Gastrocnemius medialis (tissue), 4 donors: ENCODE measurements at regions of chr6 and their contacts with region 1.

Region 1: DNA sequence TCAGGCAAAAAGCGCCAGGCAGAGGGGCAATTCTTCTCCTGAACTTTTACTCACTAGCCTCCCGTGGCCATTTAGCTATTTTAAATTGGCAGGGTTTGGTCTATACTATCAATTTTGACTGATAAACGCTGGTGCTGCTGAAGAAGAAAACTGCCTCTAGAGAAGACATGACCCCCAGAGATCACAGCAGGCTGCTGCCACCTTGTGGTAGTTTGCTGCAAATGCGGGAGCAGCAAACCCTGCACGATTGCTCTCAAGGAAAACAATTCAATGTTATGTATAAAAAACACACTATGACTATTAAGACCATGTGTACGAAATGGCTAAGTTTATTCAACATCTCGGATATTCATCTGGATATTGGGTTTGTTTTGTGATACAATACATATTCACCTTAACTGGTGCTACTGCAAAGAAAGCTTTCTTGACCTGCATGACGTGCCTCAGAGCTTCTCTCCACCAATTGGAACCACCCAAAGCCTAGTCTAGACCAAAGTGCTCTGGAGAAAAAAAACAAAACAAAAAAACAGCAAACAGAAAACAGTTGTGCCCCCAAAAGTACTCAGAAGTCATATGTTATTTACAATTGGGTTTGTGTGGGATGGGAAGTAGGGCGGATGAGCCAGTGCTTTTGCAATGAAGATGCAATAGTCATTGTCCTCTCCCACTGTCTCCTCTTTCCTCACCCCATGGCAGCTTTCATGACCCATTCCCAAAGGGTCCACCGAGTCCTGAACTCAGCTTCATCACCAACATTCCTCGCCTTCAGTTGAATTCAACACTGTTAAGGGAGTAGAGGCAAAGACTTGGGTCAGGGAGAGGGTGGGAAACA is 19.6 kb upstream of the IL17F start:
- DNase-seq: peak; percentile 18 to 43
- ATAC-seq: peak; percentile 71 to 73
- H3K4me3 ChIP-seq: no peak overlapping the region
- H3K27ac ChIP-seq: no peak overlapping the region
- H3K4me1 ChIP-seq: no peaks in the 10 kb centered on the region
- H3K27me3 ChIP-seq: no peaks in the 10 kb centered on the region
- CTCF ChIP-seq: peak; percentile 75 to 93 (median 78)
- POLR2A ChIP-seq: no peak

Region 2: GRCh38 chr6:52063584-52064344 is 200.2 kb before region 1 on chr6:
- in situ Hi-C with region 1: no loop called
- intact Hi-C with region 1: loop called (anchors 1 kb)
- DNase-seq: peak in 1 of 2 donors; percentile 25
- ATAC-seq: peak; percentile 74 to 84
- H3K4me3 ChIP-seq: peak overlapping the region in 2 of 4 donors; percentile 21 to 34
- H3K27ac ChIP-seq: no peak overlapping the region
- H3K4me1 ChIP-seq: peaks cover 0 to 3% of the 10 kb centered on the region in 2 donors
- H3K27me3 ChIP-seq: no peaks in the 10 kb centered on the region
- CTCF ChIP-seq: peak in 4 of 5 experiments; percentile 37 to 72 (median 44)
- POLR2A ChIP-seq: no peak

Region 3: DNA sequence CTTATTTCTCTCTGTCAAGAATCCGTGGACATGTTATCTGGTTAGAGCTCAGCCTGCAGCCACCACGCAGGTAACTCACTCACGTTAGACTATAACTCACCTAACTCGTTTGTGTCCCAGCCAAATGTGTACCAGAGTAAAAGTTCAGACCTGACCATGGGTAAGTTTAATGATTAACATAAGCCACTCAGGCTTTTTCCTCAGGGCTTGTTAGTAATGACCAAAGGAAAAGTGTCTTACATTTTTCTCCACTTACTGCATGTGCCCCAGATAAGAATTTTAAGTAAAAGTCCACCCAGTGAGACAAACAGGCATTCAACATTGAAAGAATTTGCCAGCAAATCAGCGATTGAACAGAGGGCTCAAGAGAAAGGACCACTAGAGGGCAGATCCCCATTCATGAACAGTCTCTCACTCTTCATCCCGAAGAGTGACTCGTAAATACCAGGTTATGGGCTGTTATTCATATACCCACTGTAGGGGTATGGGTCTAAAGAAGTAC is 176.4 kb before region 1 on chr6 and contains the start of gene PKHD1:
- in situ Hi-C with region 1: loop called in 1 of 4 experiments (anchors 10 kb)
- intact Hi-C with region 1: loop called (anchors 2 kb)
- DNase-seq: no peak
- ATAC-seq: peak in 1 of 2 donors; percentile 74
- H3K4me3 ChIP-seq: no peak within 1 kb of the TSS
- H3K27ac ChIP-seq: no peak within 1 kb of the TSS
- H3K4me1 ChIP-seq: no peaks in the 10 kb centered on the region
- H3K27me3 ChIP-seq: no peaks in the 10 kb centered on the region
- CTCF ChIP-seq: peak in 4 of 5 experiments; percentile 34 to 49 (median 42)
- POLR2A ChIP-seq: no peak
- total RNA-seq, gene PKHD1: 0.02 to 0.05 (median 0.02) TPM in 3 of 4 donors, not detected in the other

Region 4: GRCh38 chr6:52162940-52163908 is 100.7 kb before region 1 on chr6:
- in situ Hi-C with region 1: no loop called
- intact Hi-C with region 1: loop called (anchors 2 kb)
- DNase-seq: no peak
- ATAC-seq: peak in 1 of 2 donors; percentile 26
- H3K4me3 ChIP-seq: no peak overlapping the region
- H3K27ac ChIP-seq: no peak overlapping the region
- H3K4me1 ChIP-seq: no peaks in the 10 kb centered on the region
- H3K27me3 ChIP-seq: no peaks in the 10 kb centered on the region
- CTCF ChIP-seq: peak in 3 of 5 experiments; percentile 49 to 62 (median 52)
- POLR2A ChIP-seq: no peak